ENCODE measurements at regions of chr20 and their contacts with region 1.

Region 1: GRCh38 chr20:8722276-8722928 is 346.5 kb upstream of the PLCB4 start:
- DNase-seq: peak; percentile 30
- ATAC-seq: peak; percentile 93
- H3K4me3 ChIP-seq: no peak overlapping the region
- H3K27ac ChIP-seq: no peak overlapping the region
- H3K4me1 ChIP-seq: no peaks in the 10 kb centered on the region
- H3K27me3 ChIP-seq: peaks cover 1 to 2% of the 10 kb centered on the region in 2 experiments; a peak in 2 of 4 replicates
- CTCF ChIP-seq: peak; percentile 68 to 80 (median 68); a peak in 5 of 6 replicates
- EP300 ChIP-seq: no peak
- POLR2A ChIP-seq: no peak
- RAD21 ChIP-seq: peak; percentile 92

Region 2: DNA sequence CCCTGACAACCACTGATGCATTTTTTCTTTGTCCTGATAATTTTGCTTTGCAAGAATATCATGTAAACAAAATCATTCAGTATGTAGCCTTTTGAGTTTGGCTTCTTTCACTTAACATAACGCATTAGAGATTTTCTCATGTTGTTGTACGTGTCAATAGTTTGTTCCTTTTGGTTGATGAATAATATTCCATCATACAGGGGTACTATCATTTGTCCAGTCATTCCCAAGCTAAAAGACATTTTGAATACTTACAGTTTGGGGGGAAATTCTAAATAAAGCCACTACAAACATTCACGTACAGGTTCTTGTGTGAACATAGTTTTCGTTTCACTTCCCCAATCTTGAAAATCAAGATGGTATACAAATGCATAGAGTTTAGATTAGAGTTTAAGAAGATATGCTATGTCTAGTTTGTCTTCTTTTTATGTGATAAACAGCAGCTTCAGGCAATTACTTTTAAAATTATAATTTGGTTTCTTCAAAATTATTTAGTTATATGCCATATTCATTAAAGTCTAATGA is 787.3 kb before region 1 on chr20:
- CTCF ChIA-PET with region 1: interaction called, 138 read pairs
- POLR2A ChIA-PET with region 1: no interaction called
- RAD21 ChIA-PET with region 1: interaction called, 66 read pairs
- SMC1A ChIA-PET with region 1: interaction called, 44 read pairs
- in situ Hi-C with region 1: loop called (anchors 10 kb)
- intact Hi-C with region 1: loop called (anchors 1 kb)
- DNase-seq: peak; percentile 3
- ATAC-seq: peak; percentile 85
- H3K4me3 ChIP-seq: no peak overlapping the region
- H3K27ac ChIP-seq: no peak overlapping the region
- H3K4me1 ChIP-seq: no peaks in the 10 kb centered on the region; the same call in 1 of the 2 replicates
- H3K27me3 ChIP-seq: no peaks in the 10 kb centered on the region
- CTCF ChIP-seq: no peak
- EP300 ChIP-seq: 0 out of 4 replicates have a peak, but pooled peaks have one; percentile 13 to 37
- POLR2A ChIP-seq: no peak
- RAD21 ChIP-seq: no peak

Region 3: DNA sequence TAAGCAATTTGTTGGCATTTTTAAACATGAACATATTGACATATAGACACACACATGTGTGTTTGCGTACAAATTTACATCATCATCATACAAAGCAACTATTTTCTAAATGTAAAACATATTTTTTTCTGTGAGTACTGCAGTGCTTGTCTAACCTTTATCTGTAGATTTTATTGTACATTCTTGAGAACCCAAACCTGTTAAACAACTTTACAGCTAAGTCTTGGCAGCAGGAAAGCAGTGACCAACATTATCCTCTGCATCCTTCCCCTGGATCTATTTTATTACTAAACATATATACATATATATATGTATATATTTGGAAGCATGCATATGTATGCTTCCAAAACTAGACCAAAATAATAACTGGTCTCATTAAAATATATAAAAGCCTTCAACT is 600.7 kb before region 1 on chr20:
- CTCF ChIA-PET with region 1: interaction called, 14 read pairs
- POLR2A ChIA-PET with region 1: no interaction called
- RAD21 ChIA-PET with region 1: interaction called, 4 read pairs
- SMC1A ChIA-PET with region 1: interaction called, 5 read pairs
- in situ Hi-C with region 1: no loop called
- intact Hi-C with region 1: no loop called
- DNase-seq: no peak
- ATAC-seq: no peak
- H3K4me3 ChIP-seq: no peak overlapping the region
- H3K27ac ChIP-seq: no peak overlapping the region
- H3K4me1 ChIP-seq: no peaks in the 10 kb centered on the region
- H3K27me3 ChIP-seq: no peaks in the 10 kb centered on the region
- CTCF ChIP-seq: no peak
- EP300 ChIP-seq: no peak
- POLR2A ChIP-seq: no peak
- RAD21 ChIP-seq: no peak

Region 4: DNA sequence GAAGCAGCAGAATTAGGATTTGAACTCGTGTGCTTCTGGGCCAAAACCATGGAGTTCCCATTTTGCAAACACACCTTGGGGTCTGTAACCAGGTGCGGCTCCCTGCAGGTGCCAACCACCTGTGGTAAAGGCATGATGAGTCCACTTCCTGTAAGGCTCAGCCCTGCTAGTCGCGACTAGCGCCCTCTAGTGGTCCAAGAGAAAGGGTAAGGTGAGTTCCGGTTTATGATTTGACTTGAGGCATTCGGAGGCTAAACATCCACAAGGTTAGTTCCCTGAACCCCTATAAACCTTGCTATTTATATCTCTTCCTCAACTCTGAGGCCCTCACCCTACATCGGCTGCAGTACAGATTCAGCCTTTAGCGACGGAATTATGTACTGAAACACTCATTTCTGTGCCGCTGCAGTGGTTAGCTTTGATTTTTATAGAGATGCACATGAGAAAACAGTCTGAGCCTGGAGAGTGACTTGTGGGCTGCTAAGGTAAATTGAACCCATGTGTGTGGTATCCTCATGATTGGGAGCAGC is 416.9 kb before region 1 on chr20:
- CTCF ChIA-PET with region 1: interaction called, 22 read pairs
- POLR2A ChIA-PET with region 1: no interaction called
- RAD21 ChIA-PET with region 1: interaction called, 8 read pairs
- SMC1A ChIA-PET with region 1: interaction called, 5 read pairs
- in situ Hi-C with region 1: no loop called
- intact Hi-C with region 1: no loop called
- DNase-seq: peak; percentile 30
- ATAC-seq: peak; percentile 95
- H3K4me3 ChIP-seq: no peak overlapping the region
- H3K27ac ChIP-seq: no peak overlapping the region
- H3K4me1 ChIP-seq: no peaks in the 10 kb centered on the region
- H3K27me3 ChIP-seq: no peaks in the 10 kb centered on the region
- CTCF ChIP-seq: peak; percentile 65 to 80 (median 79)
- EP300 ChIP-seq: no peak
- POLR2A ChIP-seq: no peak
- RAD21 ChIP-seq: peak; percentile 60

Region 5: GRCh38 chr20:8454137-8454712 is 268.2 kb before region 1 on chr20:
- CTCF ChIA-PET with region 1: interaction called, 14 read pairs
- POLR2A ChIA-PET with region 1: no interaction called
- RAD21 ChIA-PET with region 1: no interaction called
- SMC1A ChIA-PET with region 1: interaction called, 8 read pairs
- in situ Hi-C with region 1: no loop called
- intact Hi-C with region 1: loop called (anchors 5 kb)
- DNase-seq: peak; percentile 17
- ATAC-seq: peak; percentile 87
- H3K4me3 ChIP-seq: no peak overlapping the region
- H3K27ac ChIP-seq: no peak overlapping the region
- H3K4me1 ChIP-seq: no peaks in the 10 kb centered on the region
- H3K27me3 ChIP-seq: no peaks in the 10 kb centered on the region
- CTCF ChIP-seq: peak; percentile 52 to 57 (median 52)
- EP300 ChIP-seq: no peak
- POLR2A ChIP-seq: no peak
- RAD21 ChIP-seq: peak; percentile 74

Region 6: DNA sequence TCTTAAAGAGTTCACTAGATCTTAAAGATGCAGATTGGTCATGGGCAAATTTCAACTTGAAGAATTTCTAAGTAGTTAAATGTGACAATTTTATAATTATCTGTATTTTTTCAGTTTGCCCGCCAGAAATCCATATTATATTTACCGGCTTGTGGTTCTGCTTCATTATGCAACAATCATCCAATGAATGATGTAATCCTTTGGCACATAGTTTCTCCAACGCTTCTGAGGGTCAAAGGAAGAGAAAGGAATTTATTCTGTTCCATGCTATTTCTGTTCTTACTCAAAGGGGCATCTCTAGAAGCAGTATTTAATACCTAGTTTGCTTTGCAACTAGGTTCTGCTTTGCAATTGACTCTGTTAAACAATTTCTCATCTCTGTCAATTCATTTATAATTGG is 12.8 kb before region 1 on chr20:
- CTCF ChIA-PET with region 1: interaction called, 21 read pairs
- POLR2A ChIA-PET with region 1: no interaction called
- RAD21 ChIA-PET with region 1: interaction called, 4 read pairs
- SMC1A ChIA-PET with region 1: interaction called, 17 read pairs
- in situ Hi-C with region 1: no loop called
- intact Hi-C with region 1: no loop called
- DNase-seq: no peak
- ATAC-seq: no peak
- H3K4me3 ChIP-seq: no peak overlapping the region
- H3K27ac ChIP-seq: no peak overlapping the region
- H3K4me1 ChIP-seq: no peaks in the 10 kb centered on the region
- H3K27me3 ChIP-seq: no peaks in the 10 kb centered on the region
- CTCF ChIP-seq: no peak
- EP300 ChIP-seq: no peak
- POLR2A ChIP-seq: no peak
- RAD21 ChIP-seq: no peak

Region 7: DNA sequence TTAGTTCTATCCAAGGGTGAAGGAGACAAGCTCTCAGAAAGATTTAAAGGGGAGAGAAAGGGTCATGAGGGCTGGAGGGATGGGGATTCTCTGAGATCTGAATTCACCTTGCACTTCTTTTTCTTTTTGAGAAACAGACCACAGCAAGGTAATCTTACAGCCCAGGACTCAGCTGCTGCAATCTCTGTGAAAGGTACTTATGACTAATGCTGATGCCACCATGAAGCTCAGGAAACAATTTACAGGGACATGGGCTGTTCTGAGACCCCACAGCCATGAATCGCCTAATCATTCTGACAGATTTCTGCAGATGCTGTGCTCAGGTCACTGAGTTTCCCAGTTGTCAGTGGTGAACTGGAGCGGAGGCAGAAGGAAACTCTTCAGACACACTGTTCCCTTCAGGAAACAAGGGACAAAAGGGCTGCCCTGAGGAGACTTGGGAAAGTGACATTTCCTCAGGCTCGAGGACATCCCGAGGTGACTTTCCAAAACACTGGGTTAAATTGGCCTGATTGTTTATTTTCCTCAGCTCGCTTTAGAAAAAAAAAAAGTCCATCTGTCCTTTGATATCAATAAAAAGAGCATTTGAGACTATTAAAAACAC is 242.7 kb after region 1 on chr20:
- CTCF ChIA-PET with region 1: no interaction called
- POLR2A ChIA-PET with region 1: no interaction called
- RAD21 ChIA-PET with region 1: no interaction called
- SMC1A ChIA-PET with region 1: no interaction called
- in situ Hi-C with region 1: no loop called
- intact Hi-C with region 1: no loop called
- DNase-seq: no peak
- ATAC-seq: no peak
- H3K4me3 ChIP-seq: no peak overlapping the region
- H3K27ac ChIP-seq: no peak overlapping the region
- H3K4me1 ChIP-seq: no peaks in the 10 kb centered on the region
- H3K27me3 ChIP-seq: no peaks in the 10 kb centered on the region; a peak in 1 of 4 replicates
- CTCF ChIP-seq: no peak
- EP300 ChIP-seq: no peak
- POLR2A ChIP-seq: no peak
- RAD21 ChIP-seq: no peak

Measured in GM12878 (cell line).